ENCODE measurements at regions of chr17 and their contacts with region 1.

Region 1: GRCh38 chr17:29140051-29140621 is 40.1 kb downstream of the MYO18A start:
- DNase-seq: peak; percentile 92
- ATAC-seq: peak; percentile 60
- H3K4me3 Mint-ChIP-seq: peak overlapping the region; percentile 89
- H3K27ac Mint-ChIP-seq: peak overlapping the region; percentile 97
- H3K4me1 Mint-ChIP-seq: peaks cover 74% of the 10 kb centered on the region
- H3K27me3 Mint-ChIP-seq: no peaks in the 10 kb centered on the region

Region 2: DNA sequence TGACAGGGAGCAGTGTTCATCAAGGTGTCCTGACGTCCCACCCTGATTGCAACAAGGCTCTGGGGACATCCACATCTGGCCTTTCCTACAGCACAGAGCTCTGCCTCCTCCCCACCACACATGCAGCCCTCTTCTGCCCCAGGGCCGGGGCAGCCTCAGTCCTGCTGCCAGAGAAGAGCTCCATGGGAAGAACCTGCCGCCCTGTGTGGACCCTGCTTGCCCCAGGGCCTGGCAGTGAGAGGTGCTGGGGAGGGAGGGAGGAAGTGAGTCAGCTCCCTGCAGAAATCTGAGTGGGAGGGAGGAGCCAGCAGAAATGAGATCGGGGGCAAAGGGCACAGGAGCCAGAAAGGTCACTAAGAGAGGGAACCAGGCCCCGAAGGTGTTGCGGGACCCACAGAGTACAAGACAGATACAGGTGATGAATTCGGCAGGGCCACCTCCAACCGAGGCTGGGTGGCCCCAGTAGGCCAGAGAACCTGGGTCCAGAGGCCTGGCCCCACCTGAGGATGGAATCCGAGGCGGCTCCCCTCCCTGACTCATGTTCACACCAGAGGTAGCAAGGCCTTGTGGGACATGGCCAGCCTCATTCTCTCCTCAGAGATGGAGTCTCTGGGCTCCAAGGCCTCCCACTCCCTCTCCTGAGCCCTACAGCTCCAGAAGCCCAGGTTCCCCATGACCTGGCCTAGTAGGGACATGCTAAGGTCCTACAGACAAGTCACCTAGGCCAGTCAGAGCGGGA is 15.3 kb after region 1 on chr17:
- CTCF ChIA-PET with region 1: interaction called, 65 read pairs
- POLR2A ChIA-PET with region 1: interaction called, 3 read pairs
- intact Hi-C with region 1: loop called in 1 of 2 experiments (anchors 1 kb)
- DNase-seq: peak; percentile 86
- ATAC-seq: peak; percentile 97
- H3K4me3 Mint-ChIP-seq: peak overlapping the region; percentile 45
- H3K27ac Mint-ChIP-seq: peak overlapping the region; percentile 83
- H3K4me1 Mint-ChIP-seq: peaks cover 32% of the 10 kb centered on the region
- H3K27me3 Mint-ChIP-seq: no peaks in the 10 kb centered on the region

Region 3: GRCh38 chr17:29197516-29198272 is 57.6 kb after region 1 on chr17:
- CTCF ChIA-PET with region 1: no interaction called
- POLR2A ChIA-PET with region 1: no interaction called
- intact Hi-C with region 1: no loop called
- DNase-seq: no peak
- ATAC-seq: no peak
- H3K4me3 Mint-ChIP-seq: no peak overlapping the region
- H3K27ac Mint-ChIP-seq: no peak overlapping the region
- H3K4me1 Mint-ChIP-seq: peaks cover 2% of the 10 kb centered on the region
- H3K27me3 Mint-ChIP-seq: peaks cover 4% of the 10 kb centered on the region

Measured in activated CD4-positive, alpha-beta T cell treated with anti-CD3 and anti-CD28 coated beads for 36 hours (primary cell).